Activated CD4-positive, alpha-beta T cell treated with anti-CD3 and anti-CD28 coated beads, Interleukin-2, amount 10 ng/mL, durations not matched to agents 24 days and 14 days (primary cell): ENCODE measurements at regions of chr6 and their contacts with region 1.

Region 1: GRCh38 chr6:84428300-84428907 is 201.0 kb upstream of the CEP162 start:
- DNase-seq: peak; percentile 64
- H3K4me3 Mint-ChIP-seq: no peak overlapping the region
- H3K27ac Mint-ChIP-seq: no peak overlapping the region
- H3K4me1 Mint-ChIP-seq: no peaks in the 10 kb centered on the region
- H3K27me3 Mint-ChIP-seq: peaks cover 2% of the 10 kb centered on the region

Region 2: DNA sequence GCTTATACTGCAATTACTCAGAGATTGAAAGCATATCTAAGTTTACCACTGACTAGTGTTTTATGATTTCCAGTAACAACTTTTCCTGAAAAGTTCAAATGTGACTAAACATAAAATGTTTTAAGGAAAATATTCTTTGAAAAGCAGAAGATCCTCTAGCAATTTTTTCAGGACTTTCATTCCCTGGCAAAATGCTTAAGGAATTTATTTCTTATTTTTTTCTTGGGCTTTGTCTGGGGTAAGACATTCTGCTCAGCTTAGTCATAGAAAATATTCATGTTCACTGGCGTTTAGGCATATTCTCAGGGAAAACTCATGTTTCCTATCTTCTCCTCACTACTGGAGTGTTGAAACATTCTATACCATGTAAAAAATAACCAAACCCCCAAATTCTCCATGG is 34.3 kb after region 1 on chr6:
- intact Hi-C with region 1: no loop called
- DNase-seq: no peak
- H3K4me3 Mint-ChIP-seq: no peak overlapping the region
- H3K27ac Mint-ChIP-seq: no peak overlapping the region
- H3K4me1 Mint-ChIP-seq: no peaks in the 10 kb centered on the region
- H3K27me3 Mint-ChIP-seq: no peaks in the 10 kb centered on the region

Region 3: GRCh38 chr6:85323435-85324040 is 895.1 kb after region 1 on chr6:
- intact Hi-C with region 1: loop called (anchors 5 kb)
- DNase-seq: peak; percentile 92
- H3K4me3 Mint-ChIP-seq: no peak overlapping the region
- H3K27ac Mint-ChIP-seq: no peak overlapping the region
- H3K4me1 Mint-ChIP-seq: no peaks in the 10 kb centered on the region
- H3K27me3 Mint-ChIP-seq: peaks cover 4% of the 10 kb centered on the region